HEK293 (cell line): ENCODE measurements at regions of chr20 and their contacts with region 1.

Region 1: GRCh38 chr20:53718142-53719021 is 124.7 kb upstream of the ZNF217 start:
- H3K4me3 ChIP-seq: no peak overlapping the region
- H3K27ac ChIP-seq: no peak overlapping the region
- H3K4me1 ChIP-seq: no peaks in the 10 kb centered on the region
- CTCF ChIP-seq: no peak

Region 2: GRCh38 chr20:53539516-53539915 is 178.9 kb before region 1 on chr20:
- CTCF ChIA-PET with region 1: no interaction called
- POLR2A ChIA-PET with region 1: no interaction called
- H3K4me3 ChIP-seq: no peak overlapping the region
- H3K27ac ChIP-seq: no peak overlapping the region
- H3K4me1 ChIP-seq: no peaks in the 10 kb centered on the region
- CTCF ChIP-seq: no peak

Region 3: DNA sequence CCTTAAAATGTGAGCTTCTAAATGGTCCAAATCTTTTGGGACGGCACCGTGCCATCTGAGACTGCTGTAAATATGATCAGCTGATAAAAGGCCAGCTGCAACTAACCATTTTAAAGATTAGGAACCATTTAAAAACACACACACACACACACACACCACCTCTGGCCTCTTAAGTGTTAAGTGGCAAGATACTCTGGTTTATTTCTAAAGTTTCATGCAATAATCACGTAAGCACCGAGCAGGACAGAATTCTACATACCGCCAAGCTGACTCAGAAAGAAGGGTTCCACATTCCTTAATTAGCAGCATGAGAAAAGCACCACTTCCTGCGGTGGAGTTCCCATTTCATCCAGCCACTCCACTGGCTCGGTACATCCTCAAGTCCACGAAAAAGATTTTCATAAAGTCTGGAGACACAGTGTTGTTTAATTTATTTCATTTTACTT is 106.9 kb before region 1 on chr20:
- CTCF ChIA-PET with region 1: interaction called, 10 read pairs
- POLR2A ChIA-PET with region 1: no interaction called
- H3K4me3 ChIP-seq: no peak overlapping the region
- H3K27ac ChIP-seq: peak overlapping the region; percentile 34; the same call in 1 of the 2 replicates
- H3K4me1 ChIP-seq: peaks cover 6% of the 10 kb centered on the region; the same call in 1 of the 2 replicates
- CTCF ChIP-seq: no peak

Region 4: DNA sequence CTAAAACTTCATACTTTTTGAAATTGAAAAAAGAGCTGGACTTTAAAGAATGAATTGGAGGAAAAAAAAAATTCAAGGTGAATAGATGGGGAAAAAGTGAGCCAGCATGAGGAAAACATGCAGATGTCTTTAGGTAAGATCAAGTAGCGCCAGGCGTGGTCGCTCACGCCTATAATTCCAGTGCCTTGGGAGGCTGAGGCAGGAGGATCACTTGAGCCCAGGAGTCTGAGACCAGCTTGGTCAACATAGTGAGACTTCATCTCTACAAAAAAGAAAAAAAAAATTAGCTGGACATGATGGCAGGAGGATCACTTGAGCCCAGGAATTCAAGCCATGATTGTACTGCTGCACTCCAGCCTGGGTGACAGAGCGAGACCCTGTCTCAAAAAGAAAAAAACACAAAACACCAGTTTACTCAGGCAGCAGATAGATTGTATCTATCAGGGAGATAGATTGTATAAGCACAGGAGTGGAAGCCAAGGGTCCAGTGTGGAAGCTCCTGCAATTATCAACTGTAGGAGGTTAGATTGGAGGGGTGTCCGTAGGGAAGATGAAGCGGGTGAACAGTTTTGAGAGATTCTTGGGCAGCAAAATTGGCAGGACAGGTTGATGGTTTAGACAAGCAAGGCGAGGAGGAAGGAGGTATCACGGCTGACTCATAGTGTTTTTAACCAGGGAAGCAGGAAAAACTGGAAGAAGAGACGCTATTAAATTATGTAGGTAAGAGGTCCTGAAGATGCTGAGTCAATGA is 27.1 kb before region 1 on chr20:
- CTCF ChIA-PET with region 1: interaction called, 11 read pairs
- POLR2A ChIA-PET with region 1: no interaction called
- H3K4me3 ChIP-seq: no peak overlapping the region
- H3K27ac ChIP-seq: no peak overlapping the region
- H3K4me1 ChIP-seq: no peaks in the 10 kb centered on the region
- CTCF ChIP-seq: no peak

Region 5: GRCh38 chr20:53760025-53760441 is 41.7 kb after region 1 on chr20:
- CTCF ChIA-PET with region 1: no interaction called
- POLR2A ChIA-PET with region 1: no interaction called
- H3K4me3 ChIP-seq: no peak overlapping the region
- H3K27ac ChIP-seq: no peak overlapping the region
- H3K4me1 ChIP-seq: no peaks in the 10 kb centered on the region
- CTCF ChIP-seq: no peak